ENCODE measurements at regions of chr2 and their contacts with region 1.

Region 1: GRCh38 chr2:63658176-63658968 is 69.6 kb downstream of the MDH1 start:
- DNase-seq: no peak
- H3K4me3 ChIP-seq: no peak overlapping the region
- H3K27ac ChIP-seq: no peak overlapping the region
- H3K4me1 ChIP-seq: no peaks in the 10 kb centered on the region
- H3K27me3 ChIP-seq: no peaks in the 10 kb centered on the region
- CTCF ChIP-seq: no peak

Region 2: DNA sequence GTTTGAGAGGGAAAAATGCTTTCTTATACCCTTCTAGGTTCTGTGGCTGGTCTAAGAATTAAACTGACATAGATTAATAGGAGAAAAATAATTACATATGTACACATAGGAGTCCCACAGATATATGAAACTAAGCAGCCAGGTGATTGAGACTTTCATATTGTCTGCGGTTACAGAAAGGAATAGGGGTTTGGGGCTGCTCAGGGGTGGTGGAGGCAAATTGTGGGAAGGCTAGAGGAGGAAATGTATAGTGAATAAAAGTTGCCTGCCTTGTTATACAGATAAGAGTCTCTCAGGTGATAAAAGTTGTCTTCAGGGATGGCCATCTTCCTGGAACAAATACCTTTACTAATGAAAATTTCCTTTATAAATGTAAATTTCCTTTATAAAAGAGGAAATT is 41.0 kb before region 1 on chr2:
- CTCF ChIA-PET with region 1: no interaction called
- POLR2A ChIA-PET with region 1: no interaction called
- intact Hi-C with region 1: no loop called
- DNase-seq: no peak
- H3K4me3 ChIP-seq: no peak overlapping the region
- H3K27ac ChIP-seq: no peak overlapping the region
- H3K4me1 ChIP-seq: peaks cover 38% of the 10 kb centered on the region
- H3K27me3 ChIP-seq: no peaks in the 10 kb centered on the region
- CTCF ChIP-seq: no peak

Region 3: DNA sequence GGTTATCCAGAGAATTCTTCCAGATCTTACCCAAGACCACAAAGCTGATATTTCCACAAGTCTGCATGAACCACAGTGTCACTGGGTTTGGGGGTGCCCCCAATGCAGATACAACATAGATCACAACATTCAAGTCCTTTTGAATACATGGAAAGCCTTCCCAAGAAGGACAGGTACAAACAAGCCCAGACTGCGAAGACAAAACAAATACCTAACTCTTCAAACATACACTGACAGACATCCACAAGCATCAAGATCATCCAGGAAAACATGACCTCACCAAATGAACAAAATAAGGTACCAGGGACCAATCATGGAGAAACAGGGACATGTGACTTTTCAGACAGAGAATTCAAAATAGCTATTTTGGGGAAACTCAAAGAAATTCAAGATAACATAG is 23.5 kb after region 1 on chr2:
- CTCF ChIA-PET with region 1: no interaction called
- POLR2A ChIA-PET with region 1: interaction called, 10 read pairs
- intact Hi-C with region 1: no loop called
- DNase-seq: no peak
- H3K4me3 ChIP-seq: no peak overlapping the region
- H3K27ac ChIP-seq: no peak overlapping the region
- H3K4me1 ChIP-seq: no peaks in the 10 kb centered on the region
- H3K27me3 ChIP-seq: no peaks in the 10 kb centered on the region
- CTCF ChIP-seq: no peak

Region 4: DNA sequence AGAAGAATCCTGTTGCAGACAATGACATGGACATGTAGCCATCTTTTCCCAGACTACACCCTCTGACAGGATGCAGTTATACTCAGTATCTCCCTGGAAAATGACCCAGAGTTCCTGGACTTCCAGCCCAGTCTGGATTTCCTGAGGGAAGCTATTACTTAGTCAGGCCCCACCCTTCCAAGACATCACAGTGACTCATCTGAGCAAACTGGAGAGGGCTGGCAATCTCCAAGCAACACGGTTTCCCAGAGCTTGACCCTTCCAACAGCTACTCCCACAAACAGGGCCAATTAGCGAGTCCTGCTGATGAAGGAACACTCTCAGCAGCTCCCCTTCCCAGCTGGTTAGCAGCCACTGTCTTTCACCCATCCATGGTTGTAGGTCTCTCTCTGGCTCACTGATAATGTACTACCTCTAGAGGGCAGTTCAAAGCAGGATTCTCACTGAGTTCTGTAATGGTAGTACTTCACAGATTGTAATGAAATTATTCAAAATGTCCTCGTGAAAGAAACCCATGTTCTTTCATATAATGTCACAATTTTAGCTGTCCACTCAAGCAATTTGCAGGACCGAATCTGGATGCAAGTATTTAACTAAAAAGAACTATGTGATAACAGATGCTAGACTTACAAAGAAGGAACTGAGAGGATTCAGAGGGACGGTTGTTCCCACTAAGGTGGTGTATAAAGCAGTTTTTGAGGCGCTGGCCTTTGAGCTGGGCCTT is 40.6 kb after region 1 on chr2:
- CTCF ChIA-PET with region 1: no interaction called
- POLR2A ChIA-PET with region 1: no interaction called
- intact Hi-C with region 1: no loop called
- DNase-seq: peak; percentile 52 to 75
- H3K4me3 ChIP-seq: no peak overlapping the region
- H3K27ac ChIP-seq: peak overlapping the region; percentile 54
- H3K4me1 ChIP-seq: peaks cover 25% of the 10 kb centered on the region
- H3K27me3 ChIP-seq: no peaks in the 10 kb centered on the region
- CTCF ChIP-seq: peak; percentile 63

Region 5: GRCh38 chr2:63780483-63781155 is 122.2 kb after region 1 on chr2:
- CTCF ChIA-PET with region 1: no interaction called
- POLR2A ChIA-PET with region 1: no interaction called
- intact Hi-C with region 1: no loop called
- DNase-seq: no peak
- H3K4me3 ChIP-seq: no peak overlapping the region
- H3K27ac ChIP-seq: no peak overlapping the region
- H3K4me1 ChIP-seq: no peaks in the 10 kb centered on the region
- H3K27me3 ChIP-seq: no peaks in the 10 kb centered on the region
- CTCF ChIP-seq: no peak